Transverse colon (tissue), 4 donors: ENCODE measurements at regions of chr7 and their contacts with region 1.

Region 1: GRCh38 chr7:77940647-77941046 is 142.1 kb downstream of the PHTF2 start:
- DNase-seq: peak; percentile 16
- H3K4me3 ChIP-seq: no peak overlapping the region
- H3K27ac ChIP-seq: no peak overlapping the region
- H3K4me1 ChIP-seq: peaks cover 0 to 2% (median 0%) of the 10 kb centered on the region in 4 donors
- H3K27me3 ChIP-seq: no peaks in the 10 kb centered on the region
- CTCF ChIP-seq: peak; percentile 46 to 53 (median 52)
- EP300 ChIP-seq: no peak
- POLR2A ChIP-seq: no peak

Region 2: DNA sequence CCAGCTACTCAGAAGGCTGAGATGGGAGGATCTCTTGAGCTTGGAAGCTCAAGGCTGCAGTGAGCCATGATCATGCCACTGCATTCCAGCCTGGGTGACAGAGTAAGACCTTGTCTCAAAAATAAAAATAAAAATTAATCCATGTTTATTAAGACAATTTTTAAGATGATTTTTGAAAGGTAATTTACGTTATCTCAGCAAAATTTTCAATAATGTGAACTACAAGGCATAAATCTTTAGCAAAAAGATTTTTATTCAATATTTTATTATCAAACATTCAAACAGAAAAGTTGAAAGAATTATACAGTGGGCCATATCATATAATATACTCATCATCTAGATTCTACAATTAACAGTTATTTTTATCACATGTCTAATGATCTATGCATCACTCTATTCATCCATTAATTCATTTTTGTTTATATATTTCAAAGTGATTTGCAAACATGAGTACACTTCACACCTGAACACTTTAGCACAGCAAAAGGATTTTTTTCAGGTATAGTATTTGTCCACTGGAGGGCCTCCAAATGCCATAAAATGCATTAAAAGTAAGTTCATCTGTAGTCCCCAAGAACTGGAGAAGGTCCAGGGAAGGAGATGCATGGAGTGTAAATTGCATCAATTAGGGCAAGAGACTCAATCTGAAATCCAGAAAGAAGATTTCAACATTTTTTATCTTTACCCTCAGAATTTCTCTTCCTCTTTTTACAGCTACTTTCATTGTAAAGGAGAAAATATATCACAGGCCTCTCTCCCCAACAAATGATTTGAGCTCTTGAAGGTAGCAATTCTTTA is 283.0 kb before region 1 on chr7:
- in situ Hi-C with region 1: loop called in 2 of 4 experiments (anchors 10 to 25 kb)
- intact Hi-C with region 1: no loop called
- DNase-seq: no peak
- H3K4me3 ChIP-seq: no peak overlapping the region
- H3K27ac ChIP-seq: no peak overlapping the region
- H3K4me1 ChIP-seq: peaks cover 4 to 48% (median 21%) of the 10 kb centered on the region in 4 donors
- H3K27me3 ChIP-seq: no peaks in the 10 kb centered on the region
- CTCF ChIP-seq: peak; percentile 43 to 74 (median 56)
- EP300 ChIP-seq: no peak
- POLR2A ChIP-seq: no peak

Region 3: GRCh38 chr7:78226059-78226719 is 285.5 kb after region 1 on chr7:
- in situ Hi-C with region 1: no loop called
- intact Hi-C with region 1: no loop called
- DNase-seq: peak; percentile 51
- H3K4me3 ChIP-seq: no peak overlapping the region
- H3K27ac ChIP-seq: no peak overlapping the region
- H3K4me1 ChIP-seq: peaks cover 0 to 7% (median 0%) of the 10 kb centered on the region in 4 donors
- H3K27me3 ChIP-seq: no peaks in the 10 kb centered on the region
- CTCF ChIP-seq: peak; percentile 16 to 43 (median 29)
- EP300 ChIP-seq: no peak
- POLR2A ChIP-seq: no peak